ENCODE measurements at regions of chr2 and their contacts with region 1.

Region 1: GRCh38 chr2:217993817-217994463 is 8.9 kb downstream of the TNS1 start:
- DNase-seq: peak; percentile 88

Region 2: DNA sequence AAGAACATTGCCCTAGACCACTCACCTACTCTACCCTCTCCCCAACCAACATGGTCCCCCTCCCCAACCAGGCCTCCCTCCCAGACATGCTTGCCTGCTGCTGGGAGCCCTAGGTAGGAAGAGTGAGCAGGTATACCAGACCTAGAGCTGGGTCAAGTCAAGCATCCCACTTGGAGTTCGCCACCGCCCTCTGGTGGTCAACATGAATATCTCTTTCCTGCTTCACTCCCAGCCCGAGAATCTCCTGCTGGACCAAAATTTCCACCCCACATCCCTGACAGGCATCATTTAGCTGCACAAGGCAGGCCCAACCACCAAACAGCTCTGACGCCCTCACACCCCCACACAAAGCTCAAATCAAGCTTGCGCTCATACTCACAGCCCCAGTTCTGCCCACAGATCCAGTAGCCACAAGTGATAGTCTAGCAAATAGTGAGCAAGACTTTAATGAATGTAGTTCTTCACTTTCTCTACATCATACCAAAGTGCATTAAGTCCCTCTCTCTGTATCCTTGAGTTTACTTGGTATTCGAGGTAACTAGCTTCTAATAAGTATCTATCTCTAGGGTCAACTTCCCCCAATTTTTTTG is 107.1 kb before region 1 on chr2:
- intact Hi-C with region 1: loop called in 1 of 2 experiments (anchors 5 kb)
- DNase-seq: peak; percentile 92

Region 3: GRCh38 chr2:217922101-217923006 is 71.6 kb before region 1 on chr2:
- intact Hi-C with region 1: no loop called
- DNase-seq: peak; percentile 85

Region 4: GRCh38 chr2:218026676-218027425 is 32.9 kb after region 1 on chr2:
- intact Hi-C with region 1: no loop called
- DNase-seq: no peak

Measured in posterior vena cava (tissue), 2 donors.